ENCODE measurements at regions of chr14 and their contacts with region 1.

Region 1: GRCh38 chr14:69441948-69442347 is 42.6 kb upstream of the PLEKHD1 start:
- DNase-seq: no peak
- H3K4me3 ChIP-seq: no peak overlapping the region
- CTCF ChIP-seq: no peak

Region 2: DNA sequence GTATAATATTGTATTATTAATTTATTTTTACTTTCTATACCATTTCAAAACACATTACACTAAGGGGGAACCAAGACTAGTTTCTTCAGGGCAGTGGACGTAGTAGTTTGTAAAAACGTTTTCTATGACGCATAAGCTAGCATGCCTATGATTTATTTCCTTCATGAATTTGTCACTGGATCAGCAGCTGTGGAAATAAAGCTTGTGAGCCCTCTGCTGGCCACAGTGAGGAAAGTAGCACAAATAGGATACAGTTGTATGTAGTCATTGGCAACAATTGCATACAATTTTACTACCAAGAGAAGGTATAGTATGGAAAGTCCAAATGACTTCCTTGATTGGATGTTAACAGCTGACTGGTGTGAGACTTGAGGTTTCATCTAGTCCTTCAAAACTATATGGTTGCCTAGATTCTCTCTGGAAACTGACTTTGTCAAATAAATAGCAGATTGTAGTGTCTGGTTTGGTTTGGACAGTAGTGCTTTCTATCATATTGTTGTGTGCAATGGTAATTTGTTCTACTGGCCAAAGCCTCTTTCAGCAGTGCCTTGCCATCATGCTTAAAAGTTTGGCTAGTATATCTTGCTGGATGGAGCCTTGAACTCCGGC is 18.2 kb after region 1 on chr14:
- CTCF ChIA-PET with region 1: interaction called, 95 read pairs
- POLR2A ChIA-PET with region 1: no interaction called
- DNase-seq: peak; percentile 44
- H3K4me3 ChIP-seq: no peak overlapping the region
- CTCF ChIP-seq: peak; percentile 71